Upper lobe of right lung (tissue), 1 donor: ENCODE measurements at regions of chr4 and their contacts with region 1.

Region 1: GRCh38 chr4:54322818-54323417 is 93.8 kb downstream of the PDGFRA start:
- DNase-seq: peak; percentile 70
- ATAC-seq: peak; percentile 89
- H3K4me3 ChIP-seq: no peak overlapping the region
- H3K27ac ChIP-seq: no peak overlapping the region
- H3K4me1 ChIP-seq: no peaks in the 10 kb centered on the region
- H3K27me3 ChIP-seq: no peaks in the 10 kb centered on the region
- CTCF ChIP-seq: peak; percentile 73

Region 2: GRCh38 chr4:53908661-53909078 is 414.2 kb before region 1 on chr4:
- intact Hi-C with region 1: no loop called
- DNase-seq: no peak
- ATAC-seq: peak; percentile 97
- H3K4me3 ChIP-seq: peak overlapping the region; percentile 7
- H3K27ac ChIP-seq: no peak overlapping the region
- H3K4me1 ChIP-seq: peaks cover 18% of the 10 kb centered on the region
- H3K27me3 ChIP-seq: peaks cover 12% of the 10 kb centered on the region
- CTCF ChIP-seq: peak; percentile 70

Region 3: DNA sequence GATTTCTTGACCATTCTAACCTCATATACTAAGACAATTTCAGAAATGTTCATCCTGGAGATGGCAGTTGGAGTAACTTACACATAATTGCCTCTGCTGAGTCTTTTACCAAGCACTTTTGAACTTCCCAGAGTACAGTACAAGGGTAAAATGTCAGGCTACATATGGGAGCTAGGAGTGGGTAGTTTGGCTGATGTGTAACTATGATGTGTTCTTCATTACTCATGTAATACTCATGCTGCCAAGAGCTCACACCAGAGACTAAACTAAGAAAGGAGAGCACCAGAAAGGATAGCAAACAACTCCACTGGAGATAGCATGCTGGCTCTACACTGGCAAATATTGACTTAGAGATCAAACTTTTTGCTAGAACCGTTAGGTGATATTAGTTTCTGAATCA is 100.1 kb after region 1 on chr4:
- intact Hi-C with region 1: no loop called
- DNase-seq: no peak
- ATAC-seq: no peak
- H3K4me3 ChIP-seq: no peak overlapping the region
- H3K27ac ChIP-seq: no peak overlapping the region
- H3K4me1 ChIP-seq: no peaks in the 10 kb centered on the region
- H3K27me3 ChIP-seq: no peaks in the 10 kb centered on the region
- CTCF ChIP-seq: no peak

Region 4: DNA sequence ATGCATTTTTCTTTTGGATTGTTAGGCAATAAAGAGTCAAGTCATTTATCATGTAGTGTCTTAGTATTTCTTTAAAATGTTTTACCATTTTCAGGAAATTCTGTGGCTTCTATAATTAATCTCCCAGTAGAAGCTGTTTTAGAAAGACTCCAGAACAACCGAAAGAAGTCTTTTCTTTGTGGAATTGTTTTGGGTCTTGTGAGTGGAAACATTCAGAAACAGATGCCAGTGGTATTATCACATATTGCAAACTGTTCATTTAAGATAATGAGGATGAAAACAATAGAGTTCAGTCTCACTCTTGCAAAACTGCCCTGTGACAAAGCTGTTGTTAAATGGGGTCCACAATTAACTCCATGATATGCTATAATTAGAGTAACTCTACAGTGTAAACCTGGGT is 123.7 kb after region 1 on chr4:
- intact Hi-C with region 1: loop called (anchors 5 kb)
- DNase-seq: no peak
- ATAC-seq: no peak
- H3K4me3 ChIP-seq: no peak overlapping the region
- H3K27ac ChIP-seq: no peak overlapping the region
- H3K4me1 ChIP-seq: no peaks in the 10 kb centered on the region
- H3K27me3 ChIP-seq: no peaks in the 10 kb centered on the region
- CTCF ChIP-seq: no peak